ENCODE measurements at regions of chr16 and their contacts with region 1.

Region 1: GRCh38 chr16:35823342-35823741 is 2363.9 kb downstream of the TP53TG3F start:
- DNase-seq: no peak
- ATAC-seq: no peak
- H3K4me3 ChIP-seq: no peak overlapping the region
- H3K27ac ChIP-seq: no peak overlapping the region
- H3K4me1 ChIP-seq: no peaks in the 10 kb centered on the region
- H3K27me3 ChIP-seq: no peaks in the 10 kb centered on the region
- CTCF ChIP-seq: no peak
- POLR2A ChIP-seq: no peak
- RAD21 ChIP-seq: no peak

Region 2: DNA sequence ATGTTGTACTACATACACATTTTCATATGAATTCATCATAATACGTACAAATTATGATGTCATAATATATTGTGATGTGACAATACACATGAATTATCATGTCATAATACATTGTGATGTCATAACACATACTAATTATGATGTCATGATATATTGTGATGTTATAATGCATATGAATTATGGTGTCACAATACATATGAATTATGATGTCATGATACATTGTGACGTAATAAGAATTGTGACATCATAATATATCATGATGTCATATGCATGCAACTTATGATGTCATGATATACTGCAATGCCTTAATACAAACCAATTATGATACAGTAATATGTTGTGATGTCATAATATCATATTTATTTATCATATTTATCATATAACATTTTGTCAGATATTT is 289.7 kb before region 1 on chr16:
- CTCF ChIA-PET with region 1: no interaction called
- POLR2A ChIA-PET with region 1: no interaction called
- dilution Hi-C with region 1: no loop called
- in situ Hi-C with region 1: no loop called
- intact Hi-C with region 1: no loop called
- DNase-seq: no peak
- ATAC-seq: no peak
- H3K4me3 ChIP-seq: no peak overlapping the region
- H3K27ac ChIP-seq: no peak overlapping the region
- H3K4me1 ChIP-seq: no peaks in the 10 kb centered on the region
- H3K27me3 ChIP-seq: no peaks in the 10 kb centered on the region
- CTCF ChIP-seq: no peak
- POLR2A ChIP-seq: no peak
- RAD21 ChIP-seq: no peak

Region 3: DNA sequence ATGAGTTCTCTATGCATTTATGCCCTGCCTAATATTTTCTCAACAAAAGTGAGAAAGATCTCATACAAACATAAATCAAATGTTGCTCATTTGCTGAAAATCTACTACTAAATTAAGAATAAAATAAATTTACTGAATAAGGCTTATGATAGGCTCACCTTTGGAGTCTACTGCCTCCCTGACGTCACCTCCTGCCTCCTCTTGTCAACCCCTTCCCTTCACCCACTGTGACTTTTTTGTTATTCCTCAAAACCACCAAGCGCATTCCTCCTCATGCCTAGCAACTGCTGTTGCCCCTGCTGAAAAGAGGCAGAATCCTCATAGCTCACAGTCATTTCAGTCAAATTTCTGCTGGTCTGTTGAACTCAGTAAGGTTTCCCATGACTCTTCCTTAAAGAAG is 58.3 kb after region 1 on chr16:
- CTCF ChIA-PET with region 1: no interaction called
- POLR2A ChIA-PET with region 1: no interaction called
- dilution Hi-C with region 1: no loop called
- in situ Hi-C with region 1: no loop called
- intact Hi-C with region 1: loop called (anchors 5 kb)
- DNase-seq: no peak
- ATAC-seq: no peak
- H3K4me3 ChIP-seq: no peak overlapping the region
- H3K27ac ChIP-seq: no peak overlapping the region
- H3K4me1 ChIP-seq: no peaks in the 10 kb centered on the region
- H3K27me3 ChIP-seq: no peaks in the 10 kb centered on the region
- CTCF ChIP-seq: no peak
- POLR2A ChIP-seq: no peak
- RAD21 ChIP-seq: no peak